ENCODE measurements at regions of chr1 and their contacts with region 1.

Region 1: GRCh38 chr1:116570358-116571200 is at the start of gene CD58:
- DNase-seq: peak; percentile 89
- ATAC-seq: peak; percentile 86
- H3K4me3 ChIP-seq: peak within 1 kb of the TSS; percentile 39 to 95 (median 91)
- H3K4me3 Mint-ChIP-seq: peak within 1 kb of the TSS; percentile 96
- H3K27ac ChIP-seq: peak within 1 kb of the TSS; percentile 79 to 92
- H3K27ac Mint-ChIP-seq: peak within 1 kb of the TSS; percentile 94
- H3K4me1 ChIP-seq: peaks cover 9 to 33% of the 10 kb centered on the region in 2 donors
- H3K4me1 Mint-ChIP-seq: peaks cover 63% of the 10 kb centered on the region
- H3K27me3 ChIP-seq: peaks cover 0 to 3% (median 0%) of the 10 kb centered on the region in 4 experiments
- H3K27me3 Mint-ChIP-seq: no peaks in the 10 kb centered on the region
- CTCF ChIP-seq: peak; percentile 84
- total RNA-seq, gene CD58: 47.1 and 47.6 TPM in 2 replicates

Region 2: GRCh38 chr1:116139592-116140134 is 430.9 kb before region 1 on chr1:
- CTCF ChIA-PET with region 1: interaction called, 9 read pairs
- POLR2A ChIA-PET with region 1: no interaction called
- intact Hi-C with region 1: loop called (anchors 2 kb)
- DNase-seq: no peak
- ATAC-seq: no peak
- H3K4me3 ChIP-seq: no peak overlapping the region
- H3K4me3 Mint-ChIP-seq: no peak overlapping the region
- H3K27ac ChIP-seq: no peak overlapping the region
- H3K27ac Mint-ChIP-seq: no peak overlapping the region
- H3K4me1 ChIP-seq: no peaks in the 10 kb centered on the region
- H3K4me1 Mint-ChIP-seq: peaks cover 5% of the 10 kb centered on the region
- H3K27me3 ChIP-seq: peaks cover 0 to 5% (median under 1%) of the 10 kb centered on the region in 4 experiments
- H3K27me3 Mint-ChIP-seq: peaks cover 11% of the 10 kb centered on the region
- CTCF ChIP-seq: no peak

Region 3: DNA sequence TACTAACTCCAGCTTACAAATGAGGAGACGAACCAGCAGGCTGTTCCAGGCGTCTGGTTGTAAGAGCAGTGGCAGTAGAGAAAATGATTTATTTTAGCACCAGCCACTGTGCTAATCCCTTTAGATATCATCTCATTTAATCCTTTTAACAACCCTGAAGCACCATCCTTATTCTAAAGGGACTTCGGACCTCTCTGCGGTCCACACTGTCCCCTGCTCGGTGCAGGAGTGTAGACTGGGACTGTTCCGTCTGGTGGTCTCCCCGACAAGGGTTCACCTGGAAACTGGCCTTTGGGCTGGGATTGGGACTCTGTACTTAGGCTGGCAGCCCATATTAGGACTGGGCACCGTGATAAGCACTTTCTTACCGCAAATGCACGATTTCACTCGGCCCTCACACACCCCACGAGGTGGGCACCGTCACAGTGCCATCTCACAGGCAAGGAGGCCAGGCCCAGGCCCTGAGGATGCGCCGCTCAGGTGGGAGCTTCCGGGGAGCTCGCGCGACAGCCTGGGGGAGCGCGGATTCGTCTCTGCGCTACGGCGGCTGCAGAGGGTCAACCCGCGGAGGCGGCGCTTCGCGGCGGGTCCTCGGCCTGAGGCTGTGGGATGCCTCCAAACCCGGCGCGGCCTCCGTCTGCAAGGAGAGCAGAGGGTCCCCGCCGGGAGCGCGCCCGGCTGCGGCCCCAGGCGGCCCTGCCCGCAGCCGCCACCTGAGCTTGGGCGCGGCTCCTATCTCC is 152.3 kb before region 1 on chr1:
- CTCF ChIA-PET with region 1: no interaction called
- POLR2A ChIA-PET with region 1: no interaction called
- intact Hi-C with region 1: loop called (anchors 2 kb)
- DNase-seq: peak; percentile 92
- ATAC-seq: peak; percentile 95
- H3K4me3 ChIP-seq: peak overlapping the region; percentile 66 to 86 (median 84)
- H3K4me3 Mint-ChIP-seq: peak overlapping the region; percentile 86
- H3K27ac ChIP-seq: peak overlapping the region; percentile 62 to 80
- H3K27ac Mint-ChIP-seq: peak overlapping the region; percentile 91
- H3K4me1 ChIP-seq: peaks cover 16 to 20% of the 10 kb centered on the region in 2 donors
- H3K4me1 Mint-ChIP-seq: peaks cover 26% of the 10 kb centered on the region
- H3K27me3 ChIP-seq: no peaks in the 10 kb centered on the region
- H3K27me3 Mint-ChIP-seq: peaks cover 4% of the 10 kb centered on the region
- CTCF ChIP-seq: no peak

Region 4: GRCh38 chr1:116498789-116499628 is 71.6 kb before region 1 on chr1:
- CTCF ChIA-PET with region 1: interaction called, 20 read pairs
- POLR2A ChIA-PET with region 1: interaction called, 10 read pairs
- intact Hi-C with region 1: loop called (anchors 1 kb)
- DNase-seq: peak; percentile 65
- ATAC-seq: peak; percentile 76
- H3K4me3 ChIP-seq: no peak overlapping the region
- H3K4me3 Mint-ChIP-seq: no peak overlapping the region
- H3K27ac ChIP-seq: no peak overlapping the region
- H3K27ac Mint-ChIP-seq: no peak overlapping the region
- H3K4me1 ChIP-seq: peaks cover 14 to 16% of the 10 kb centered on the region in 2 donors
- H3K4me1 Mint-ChIP-seq: peaks cover 23% of the 10 kb centered on the region
- H3K27me3 ChIP-seq: no peaks in the 10 kb centered on the region
- H3K27me3 Mint-ChIP-seq: no peaks in the 10 kb centered on the region
- CTCF ChIP-seq: peak; percentile 80

Region 5: DNA sequence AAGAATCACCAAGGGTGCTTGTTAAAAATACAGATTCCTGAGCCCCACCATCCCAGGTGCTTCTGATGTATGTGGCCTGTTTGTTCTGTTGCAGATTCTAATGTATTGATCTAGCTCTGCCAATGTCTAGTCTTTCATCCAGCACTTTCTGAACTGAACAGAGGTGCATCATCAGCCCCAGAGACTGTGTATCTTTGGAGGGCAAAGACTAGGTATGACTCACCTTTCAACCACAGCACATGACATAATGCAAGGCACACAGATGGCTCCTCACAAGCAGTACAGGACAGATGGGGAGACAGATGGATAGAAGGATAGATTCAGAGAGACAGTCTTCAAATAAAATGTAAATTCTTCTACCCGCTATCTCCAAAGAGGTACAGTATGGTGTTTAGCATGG is 32.0 kb before region 1 on chr1:
- CTCF ChIA-PET with region 1: interaction called, 12 read pairs
- POLR2A ChIA-PET with region 1: no interaction called
- intact Hi-C with region 1: loop called (anchors 1 kb)
- DNase-seq: no peak
- ATAC-seq: peak; percentile 68
- H3K4me3 ChIP-seq: no peak overlapping the region
- H3K4me3 Mint-ChIP-seq: no peak overlapping the region
- H3K27ac ChIP-seq: no peak overlapping the region
- H3K27ac Mint-ChIP-seq: peak overlapping the region; percentile 16
- H3K4me1 ChIP-seq: peaks cover 11 to 19% of the 10 kb centered on the region in 2 donors
- H3K4me1 Mint-ChIP-seq: peaks cover 49% of the 10 kb centered on the region
- H3K27me3 ChIP-seq: no peaks in the 10 kb centered on the region
- H3K27me3 Mint-ChIP-seq: no peaks in the 10 kb centered on the region
- CTCF ChIP-seq: no peak

Region 6: DNA sequence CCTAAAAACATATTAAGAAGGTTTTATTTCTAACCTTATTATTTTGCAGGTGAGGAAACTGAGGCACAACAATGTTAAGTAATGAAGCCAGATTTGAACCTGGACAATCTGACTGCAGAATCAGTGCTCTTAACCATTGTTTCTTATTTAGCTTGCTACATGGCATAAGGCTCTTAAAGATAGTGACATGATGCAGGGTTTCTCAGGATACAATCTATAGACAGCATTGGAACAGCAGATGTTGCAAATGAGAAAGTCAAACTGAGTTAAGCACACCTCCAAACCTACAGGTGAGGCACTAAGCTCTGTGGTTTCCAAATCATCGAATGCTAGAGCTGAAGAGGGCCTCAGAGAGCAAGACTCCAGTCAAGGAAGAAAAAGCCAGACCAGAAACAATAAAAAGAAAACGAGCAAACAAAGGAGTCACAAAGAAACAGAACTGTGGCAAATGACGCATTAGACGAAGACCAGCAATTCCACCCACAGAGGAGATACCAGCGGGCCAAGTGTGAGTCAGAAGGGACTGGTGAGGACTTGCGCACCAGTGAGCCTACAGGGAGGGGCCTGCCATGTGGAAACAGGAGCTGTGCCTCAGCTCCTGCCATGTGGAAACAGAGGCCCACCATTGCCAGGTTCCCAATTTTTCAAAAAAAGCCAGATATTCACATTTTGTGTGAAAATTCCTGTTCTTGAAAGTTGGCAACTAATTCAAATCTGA is 14.1 kb before region 1 on chr1:
- CTCF ChIA-PET with region 1: interaction called, 27 read pairs
- POLR2A ChIA-PET with region 1: interaction called, 7 read pairs
- intact Hi-C with region 1: loop called (anchors 1 kb)
- DNase-seq: peak; percentile 65
- ATAC-seq: peak; percentile 76
- H3K4me3 ChIP-seq: peak overlapping the region in 1 of 5 experiments; percentile 26
- H3K4me3 Mint-ChIP-seq: peak overlapping the region; percentile 65
- H3K27ac ChIP-seq: peak overlapping the region; percentile 63 to 69
- H3K27ac Mint-ChIP-seq: peak overlapping the region; percentile 88
- H3K4me1 ChIP-seq: peaks cover 58 to 67% of the 10 kb centered on the region in 2 donors
- H3K4me1 Mint-ChIP-seq: peaks cover 82% of the 10 kb centered on the region
- H3K27me3 ChIP-seq: no peaks in the 10 kb centered on the region
- H3K27me3 Mint-ChIP-seq: no peaks in the 10 kb centered on the region
- CTCF ChIP-seq: no peak

Region 7: GRCh38 chr1:116628448-116628847 is 57.9 kb after region 1 on chr1:
- CTCF ChIA-PET with region 1: no interaction called
- POLR2A ChIA-PET with region 1: no interaction called
- intact Hi-C with region 1: no loop called
- DNase-seq: peak; percentile 60
- ATAC-seq: no peak
- H3K4me3 ChIP-seq: no peak overlapping the region
- H3K4me3 Mint-ChIP-seq: peak overlapping the region; percentile 64
- H3K27ac ChIP-seq: no peak overlapping the region
- H3K27ac Mint-ChIP-seq: no peak overlapping the region
- H3K4me1 ChIP-seq: peaks cover 15% of the 10 kb centered on the region in 2 donors
- H3K4me1 Mint-ChIP-seq: peaks cover 22% of the 10 kb centered on the region
- H3K27me3 ChIP-seq: no peaks in the 10 kb centered on the region
- H3K27me3 Mint-ChIP-seq: peaks cover 4% of the 10 kb centered on the region
- CTCF ChIP-seq: no peak

Region 8: DNA sequence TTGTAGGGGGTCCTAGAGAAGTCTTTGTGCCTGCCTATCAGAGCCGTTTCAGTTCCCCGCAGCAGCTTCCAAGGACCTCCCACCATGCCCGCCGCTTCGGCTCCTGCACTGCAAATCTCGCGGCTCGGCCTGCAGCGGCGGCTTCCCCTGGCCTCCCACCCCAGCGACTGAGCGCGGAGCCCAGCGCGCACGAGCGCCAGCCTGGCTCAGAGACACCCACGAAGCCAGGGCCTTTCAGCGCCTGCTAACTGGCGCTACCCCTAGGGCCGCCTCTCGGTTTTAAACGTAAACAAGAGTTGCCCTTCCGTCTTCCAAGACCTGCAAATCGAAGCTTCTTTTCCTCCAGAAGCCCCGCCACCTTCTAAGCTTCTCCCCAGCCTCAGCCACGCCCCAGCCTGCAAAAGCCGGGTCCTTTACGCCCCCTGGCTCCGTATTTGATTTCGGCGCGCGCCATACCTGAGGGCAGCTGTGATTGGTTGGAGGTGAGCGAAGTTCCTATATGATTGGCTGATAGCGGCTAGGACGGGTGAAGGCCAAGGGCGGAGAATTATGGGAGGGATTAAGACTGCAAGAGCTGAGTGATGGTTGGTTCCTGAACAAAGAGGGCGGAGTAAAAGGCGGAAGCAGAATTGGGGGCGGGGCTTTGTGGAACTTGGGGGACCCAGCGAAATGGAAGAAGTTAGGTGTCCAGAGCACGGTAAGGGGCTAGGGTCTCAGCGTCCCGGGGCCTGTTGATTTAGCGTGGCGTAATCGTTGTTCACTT is 489.3 kb after region 1 on chr1 and contains the start of gene TTF2:
- CTCF ChIA-PET with region 1: interaction called, 14 read pairs
- POLR2A ChIA-PET with region 1: no interaction called
- intact Hi-C with region 1: loop called (anchors 1 kb)
- DNase-seq: peak; percentile 98
- ATAC-seq: peak; percentile 96
- H3K4me3 ChIP-seq: peak within 1 kb of the TSS; percentile 71 to 95 (median 79)
- H3K4me3 Mint-ChIP-seq: no peak within 1 kb of the TSS
- H3K27ac ChIP-seq: peak within 1 kb of the TSS; percentile 69 to 76
- H3K27ac Mint-ChIP-seq: no peak within 1 kb of the TSS
- H3K4me1 ChIP-seq: peaks cover 14 to 17% of the 10 kb centered on the region in 2 donors
- H3K4me1 Mint-ChIP-seq: peaks cover 25% of the 10 kb centered on the region
- H3K27me3 ChIP-seq: no peaks in the 10 kb centered on the region
- H3K27me3 Mint-ChIP-seq: no peaks in the 10 kb centered on the region
- CTCF ChIP-seq: peak; percentile 5
- total RNA-seq, gene TTF2: 28.9 and 29.1 TPM in 2 replicates

Measured in B cell (primary cell).